H1 (cell line): ENCODE measurements at regions of chr7 and their contacts with region 1.

Region 1: GRCh38 chr7:2732959-2733584 is 45.1 kb downstream of the AMZ1 start:
- DNase-seq: peak in 1 of 2 experiments; percentile 33
- H3K4me3 ChIP-seq: no peak overlapping the region
- H3K27ac ChIP-seq: no peak overlapping the region
- H3K4me1 ChIP-seq: peaks cover 0 to 12% (median 6%) of the 10 kb centered on the region in 4 experiments; a peak in 4 of 7 replicates
- H3K27me3 ChIP-seq: no peaks in the 10 kb centered on the region
- CTCF ChIP-seq: no peak
- EP300 ChIP-seq: no peak
- POLR2A ChIP-seq: no peak
- RAD21 ChIP-seq: no peak

Region 2: DNA sequence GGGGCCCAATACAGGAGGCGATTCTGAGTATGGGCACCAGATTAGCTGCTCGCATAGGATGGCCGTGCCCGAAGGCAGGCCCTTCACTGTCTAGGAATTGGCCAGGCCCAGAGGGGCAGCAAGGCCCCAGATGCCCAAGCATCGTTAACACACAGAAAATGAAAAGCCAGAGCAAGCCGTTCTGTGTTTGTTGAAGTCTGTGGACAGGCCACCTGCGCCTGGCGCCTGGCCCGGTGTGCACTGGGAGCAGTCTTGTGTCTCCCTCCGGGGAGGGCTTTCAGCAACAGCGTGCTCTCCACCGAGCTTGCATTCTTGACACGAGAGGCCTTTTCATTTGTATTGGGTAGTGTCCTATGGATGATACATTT is 135.8 kb before region 1 on chr7:
- CTCF ChIA-PET with region 1: no interaction called
- POLR2A ChIA-PET with region 1: no interaction called
- DNase-seq: no peak
- H3K4me3 ChIP-seq: no peak overlapping the region
- H3K27ac ChIP-seq: no peak overlapping the region
- H3K4me1 ChIP-seq: peaks cover 0 to 3% (median 1%) of the 10 kb centered on the region in 4 experiments; a peak in 2 of 7 replicates
- H3K27me3 ChIP-seq: no peaks in the 10 kb centered on the region
- CTCF ChIP-seq: no peak
- EP300 ChIP-seq: no peak
- POLR2A ChIP-seq: no peak
- RAD21 ChIP-seq: no peak

Region 3: DNA sequence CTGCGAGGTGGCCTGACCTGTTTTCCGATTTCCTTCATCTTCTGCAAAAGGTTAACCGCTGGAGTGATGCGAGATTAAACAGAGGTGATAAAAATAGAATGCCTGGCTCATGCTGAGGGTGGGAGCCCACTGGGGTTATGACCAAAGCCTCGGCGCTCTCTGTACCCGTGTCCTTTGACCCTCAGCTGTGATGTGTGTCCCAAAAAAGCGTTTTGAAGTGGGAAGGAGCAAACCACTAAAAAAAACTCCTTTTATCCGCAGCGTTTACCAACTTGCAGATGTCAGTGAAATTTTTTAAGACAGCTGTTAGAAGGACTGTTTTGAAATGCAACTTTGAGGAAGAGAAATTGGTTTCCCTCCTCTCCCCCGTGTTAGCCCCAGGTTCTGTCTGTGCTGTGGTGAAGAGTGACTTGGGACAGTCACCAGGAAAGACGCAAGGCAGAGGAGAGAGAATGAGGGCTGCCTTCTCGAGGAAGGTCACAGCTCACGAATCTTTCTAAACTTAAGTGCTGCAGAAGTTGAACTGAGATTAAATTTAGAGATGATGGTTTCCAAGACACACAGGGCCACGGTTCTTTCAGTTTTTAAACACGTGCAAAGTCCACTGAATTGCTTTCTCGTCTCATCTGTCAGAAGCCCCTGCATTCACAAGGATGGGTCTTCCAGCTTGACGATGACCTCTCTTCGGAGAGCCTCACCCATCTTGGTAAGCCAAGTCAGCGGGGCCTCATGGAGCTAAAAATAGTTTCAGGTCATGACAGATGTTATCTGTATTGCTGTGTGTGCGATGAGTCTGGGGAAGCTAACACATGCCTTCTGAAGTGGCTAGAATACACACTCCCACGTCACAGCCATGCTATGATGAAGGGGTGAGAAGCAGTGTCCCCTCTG is 17.5 kb before region 1 on chr7:
- CTCF ChIA-PET with region 1: interaction called, 27 read pairs
- POLR2A ChIA-PET with region 1: interaction called, 5 read pairs
- DNase-seq: no peak
- H3K4me3 ChIP-seq: no peak overlapping the region
- H3K27ac ChIP-seq: no peak overlapping the region
- H3K4me1 ChIP-seq: no peaks in the 10 kb centered on the region; a peak in 3 of 7 replicates
- H3K27me3 ChIP-seq: no peaks in the 10 kb centered on the region
- CTCF ChIP-seq: no peak
- EP300 ChIP-seq: no peak
- POLR2A ChIP-seq: no peak
- RAD21 ChIP-seq: no peak

Region 4: GRCh38 chr7:2720582-2721491 is 12.2 kb before region 1 on chr7:
- CTCF ChIA-PET with region 1: interaction called, 27 read pairs
- POLR2A ChIA-PET with region 1: interaction called, 4 read pairs
- DNase-seq: no peak
- H3K4me3 ChIP-seq: no peak overlapping the region
- H3K27ac ChIP-seq: no peak overlapping the region
- H3K4me1 ChIP-seq: no peaks in the 10 kb centered on the region; a peak in 4 of 7 replicates
- H3K27me3 ChIP-seq: no peaks in the 10 kb centered on the region
- CTCF ChIP-seq: peak in 2 of 3 experiments; percentile 6 to 14; a peak in 2 of 4 replicates
- EP300 ChIP-seq: no peak
- POLR2A ChIP-seq: no peak
- RAD21 ChIP-seq: peak in 1 of 2 experiments; percentile 40; a peak in 2 of 4 replicates

Region 5: DNA sequence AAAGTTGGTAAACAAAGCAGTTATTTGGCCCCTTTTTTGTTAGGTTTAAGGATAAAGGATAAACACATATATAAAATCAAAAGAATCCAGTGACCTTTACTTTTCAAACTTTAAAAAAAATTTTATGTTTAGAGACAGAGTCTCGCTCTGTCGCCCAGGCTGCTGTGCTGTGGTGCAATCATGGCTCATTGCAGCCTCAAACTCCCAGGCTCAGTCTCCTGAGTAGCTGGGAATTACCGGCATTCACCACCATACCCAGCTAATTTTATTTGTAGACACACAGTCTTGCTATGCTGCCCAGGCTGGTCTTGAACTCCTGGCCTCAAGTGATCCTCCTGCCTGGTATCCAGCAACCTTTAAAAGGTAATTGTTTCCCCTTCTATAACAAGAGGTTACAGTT is 79.8 kb after region 1 on chr7:
- CTCF ChIA-PET with region 1: no interaction called
- POLR2A ChIA-PET with region 1: no interaction called
- DNase-seq: no peak
- H3K4me3 ChIP-seq: no peak overlapping the region
- H3K27ac ChIP-seq: no peak overlapping the region
- H3K4me1 ChIP-seq: peaks cover 25 to 48% (median 32%) of the 10 kb centered on the region in 4 experiments
- H3K27me3 ChIP-seq: no peaks in the 10 kb centered on the region
- CTCF ChIP-seq: no peak
- EP300 ChIP-seq: no peak
- POLR2A ChIP-seq: no peak
- RAD21 ChIP-seq: no peak

Region 6: GRCh38 chr7:2968616-2969374 is 235.7 kb after region 1 on chr7:
- CTCF ChIA-PET with region 1: no interaction called
- POLR2A ChIA-PET with region 1: no interaction called
- DNase-seq: no peak
- H3K4me3 ChIP-seq: no peak overlapping the region
- H3K27ac ChIP-seq: no peak overlapping the region
- H3K4me1 ChIP-seq: no peaks in the 10 kb centered on the region
- H3K27me3 ChIP-seq: no peaks in the 10 kb centered on the region
- CTCF ChIP-seq: no peak
- EP300 ChIP-seq: no peak
- POLR2A ChIP-seq: no peak
- RAD21 ChIP-seq: no peak